PC-3 (cell line): ENCODE measurements at regions of chr11 and their contacts with region 1.

Region 1: GRCh38 chr11:87583931-87584330 is 546.2 kb downstream of the TMEM135 start:
- DNase-seq: no peak
- ATAC-seq: no peak
- H3K4me3 ChIP-seq: no peak overlapping the region
- H3K27ac ChIP-seq: no peak overlapping the region
- H3K4me1 ChIP-seq: peaks cover 11% of the 10 kb centered on the region
- H3K27me3 ChIP-seq: no peaks in the 10 kb centered on the region
- CTCF ChIP-seq: no peak

Region 2: GRCh38 chr11:87266751-87267150 is 317.2 kb before region 1 on chr11:
- CTCF ChIA-PET with region 1: no interaction called
- POLR2A ChIA-PET with region 1: no interaction called
- intact Hi-C with region 1: no loop called
- DNase-seq: no peak
- ATAC-seq: no peak
- H3K4me3 ChIP-seq: no peak overlapping the region
- H3K27ac ChIP-seq: no peak overlapping the region
- H3K4me1 ChIP-seq: peaks cover 15% of the 10 kb centered on the region
- H3K27me3 ChIP-seq: no peaks in the 10 kb centered on the region
- CTCF ChIP-seq: no peak

Region 3: GRCh38 chr11:87572881-87573280 is 11.1 kb before region 1 on chr11:
- CTCF ChIA-PET with region 1: no interaction called
- POLR2A ChIA-PET with region 1: no interaction called
- intact Hi-C with region 1: no loop called
- DNase-seq: no peak
- ATAC-seq: no peak
- H3K4me3 ChIP-seq: no peak overlapping the region
- H3K27ac ChIP-seq: no peak overlapping the region
- H3K4me1 ChIP-seq: no peaks in the 10 kb centered on the region
- H3K27me3 ChIP-seq: no peaks in the 10 kb centered on the region
- CTCF ChIP-seq: no peak

Region 4: DNA sequence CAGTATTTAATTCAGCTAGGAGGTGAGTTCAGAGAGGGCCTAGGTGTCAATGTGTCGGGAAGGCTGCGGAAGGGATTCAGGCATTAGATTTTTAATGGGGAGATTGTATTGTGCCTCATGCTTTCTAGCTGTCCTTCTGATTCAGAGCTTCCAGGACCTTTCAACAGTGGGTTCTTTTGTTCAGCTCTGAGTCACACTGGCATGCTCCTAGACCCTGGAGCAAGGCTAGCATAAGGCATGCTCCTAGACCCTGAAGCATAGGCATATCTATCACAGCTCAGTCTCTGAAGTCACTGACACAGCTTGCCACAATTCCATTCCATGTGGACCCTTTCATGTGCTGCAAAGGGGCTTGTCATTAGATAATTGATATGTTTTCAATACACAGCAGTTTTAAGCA is 194.4 kb after region 1 on chr11:
- CTCF ChIA-PET with region 1: interaction called, 13 read pairs
- POLR2A ChIA-PET with region 1: no interaction called
- intact Hi-C with region 1: no loop called
- DNase-seq: peak; percentile 77
- ATAC-seq: peak; percentile 100
- H3K4me3 ChIP-seq: no peak overlapping the region
- H3K27ac ChIP-seq: peak overlapping the region; percentile 44
- H3K4me1 ChIP-seq: peaks cover 8% of the 10 kb centered on the region; the same call in 1 of the 2 replicates
- H3K27me3 ChIP-seq: no peaks in the 10 kb centered on the region
- CTCF ChIP-seq: no peak